ENCODE measurements at regions of chr1 and their contacts with region 1.

Region 1: DNA sequence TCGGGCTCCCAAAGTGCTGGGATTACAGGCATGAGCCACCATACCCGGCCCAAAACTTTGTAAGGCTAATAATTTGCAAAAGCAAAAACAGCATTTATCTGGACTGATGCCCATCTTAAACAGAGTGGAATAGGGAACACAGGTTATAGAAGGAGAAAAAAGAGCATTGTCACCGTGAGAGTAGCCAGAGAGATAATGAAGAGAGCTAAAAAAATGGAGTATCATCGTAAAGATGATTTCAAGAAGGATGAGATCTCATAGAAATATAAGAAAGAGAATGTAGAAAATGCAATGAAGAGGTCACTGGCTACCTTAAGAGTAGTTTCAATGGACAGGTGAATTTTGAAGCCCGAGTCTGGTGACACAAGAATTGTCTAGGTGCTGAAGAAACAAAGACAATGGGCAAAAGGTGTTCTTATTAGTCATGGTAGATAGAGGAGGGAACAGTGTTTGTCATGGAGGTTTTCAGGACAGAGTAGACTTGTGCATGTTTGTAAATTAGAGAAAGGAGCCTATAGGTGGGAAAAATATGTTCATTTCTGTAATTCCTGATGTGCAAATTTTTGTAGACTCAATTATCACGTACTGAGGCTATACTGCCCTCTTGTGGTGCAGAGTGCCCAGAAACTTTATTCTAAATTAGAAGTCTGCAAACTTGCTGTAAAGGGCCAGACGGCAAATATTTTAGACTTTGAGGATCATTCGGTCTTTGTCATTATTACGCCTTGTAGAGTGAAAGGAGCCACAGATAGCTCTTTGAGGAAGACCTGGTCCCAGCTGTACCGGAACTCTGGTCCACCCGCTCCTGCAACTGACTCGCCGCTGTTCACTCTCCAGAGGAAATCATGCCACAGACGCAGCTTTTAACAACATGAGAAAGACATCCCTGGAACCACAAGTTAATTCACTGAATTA is 8.1 kb upstream of the TMEM183A start:
- H3K4me3 Mint-ChIP-seq: peak overlapping the region; percentile 27
- H3K27ac Mint-ChIP-seq: no peak overlapping the region
- H3K4me1 Mint-ChIP-seq: peaks cover 38% of the 10 kb centered on the region
- H3K27me3 Mint-ChIP-seq: no peaks in the 10 kb centered on the region

Region 2: DNA sequence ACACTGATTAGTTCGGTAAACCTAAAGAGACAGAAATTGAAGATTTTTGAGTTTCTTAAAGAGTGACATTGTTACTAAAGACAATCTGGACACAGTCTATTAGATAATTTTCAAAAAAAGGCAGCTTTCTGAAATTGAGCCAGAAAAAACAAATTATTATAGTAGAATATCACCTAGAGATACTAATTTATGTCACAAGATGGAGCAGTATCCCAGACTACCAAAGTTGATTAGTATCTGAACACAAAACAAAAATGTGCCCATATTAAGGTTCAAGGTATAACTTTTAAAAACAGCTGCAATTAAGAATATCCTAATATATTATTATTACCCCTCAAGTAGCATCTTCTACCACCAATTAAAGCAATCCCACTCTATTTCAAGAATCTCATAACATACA is 248.3 kb before region 1 on chr1:
- intact Hi-C with region 1: loop called (anchors 10 kb)
- H3K4me3 Mint-ChIP-seq: no peak overlapping the region
- H3K27ac Mint-ChIP-seq: no peak overlapping the region
- H3K4me1 Mint-ChIP-seq: peaks cover 11% of the 10 kb centered on the region
- H3K27me3 Mint-ChIP-seq: no peaks in the 10 kb centered on the region

Region 3: DNA sequence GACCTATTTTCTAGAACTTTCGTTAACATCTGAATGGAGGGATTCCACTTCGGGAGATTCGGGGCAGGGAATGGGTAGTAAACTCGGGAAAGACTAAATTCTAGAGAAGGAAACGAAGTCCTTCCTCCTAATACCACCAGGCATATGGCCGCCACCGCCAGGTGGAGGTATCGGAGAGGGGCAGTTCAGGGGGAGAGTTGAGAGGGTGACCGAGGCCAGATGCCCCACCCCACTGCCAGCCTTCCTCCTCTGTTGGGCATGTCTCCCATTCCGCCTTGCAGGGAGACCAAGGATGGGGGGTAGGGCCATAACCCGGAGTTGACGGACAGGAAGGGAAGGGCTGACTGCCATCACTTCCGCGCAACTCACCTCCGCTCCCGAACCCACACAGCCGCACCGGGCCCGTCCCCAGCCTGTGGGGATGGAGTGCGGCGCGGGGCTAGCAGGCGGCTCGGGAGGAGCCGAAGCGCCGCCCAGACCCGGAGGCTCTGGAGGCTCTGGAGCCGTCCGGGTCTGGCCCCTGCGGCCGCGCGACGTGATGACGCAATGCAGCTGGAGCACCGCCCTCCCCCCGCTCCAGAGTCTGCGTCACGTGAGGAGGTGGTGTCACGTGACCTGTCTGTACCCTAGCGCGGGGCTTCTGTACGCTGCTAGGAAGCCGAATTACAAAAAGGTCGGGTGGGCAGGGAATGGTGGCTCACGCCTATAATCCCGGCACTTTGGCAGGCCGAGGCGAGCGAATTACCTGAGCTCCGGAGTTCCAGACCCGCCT is 72.2 kb before region 1 on chr1 and contains the start of gene KLHL12:
- intact Hi-C with region 1: loop called (anchors 2 kb)
- H3K4me3 Mint-ChIP-seq: peak within 1 kb of the TSS; percentile 91
- H3K27ac Mint-ChIP-seq: peak within 1 kb of the TSS; percentile 95
- H3K4me1 Mint-ChIP-seq: peaks cover 40% of the 10 kb centered on the region
- H3K27me3 Mint-ChIP-seq: peaks cover 3% of the 10 kb centered on the region

Region 4: DNA sequence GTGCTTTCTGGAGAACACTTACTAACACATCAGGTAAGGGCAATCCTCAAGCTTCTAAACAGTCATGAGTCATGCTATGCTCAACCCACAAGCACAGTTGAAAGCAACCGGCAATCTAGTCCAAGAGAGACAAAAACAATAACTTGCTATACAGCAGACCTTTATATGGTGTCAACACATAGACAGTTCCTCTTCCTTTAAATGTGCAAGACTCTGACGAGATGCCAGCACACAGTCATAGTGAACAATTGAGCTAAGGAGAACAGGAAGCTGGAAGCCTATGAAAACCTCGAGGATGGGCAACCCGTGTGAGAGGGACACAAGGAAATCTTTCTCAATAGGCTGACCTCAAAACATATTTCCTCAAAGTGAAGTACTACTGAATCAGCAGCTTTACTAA is 46.3 kb before region 1 on chr1:
- intact Hi-C with region 1: loop called (anchors 2 kb)
- H3K4me3 Mint-ChIP-seq: peak overlapping the region; percentile 59
- H3K27ac Mint-ChIP-seq: peak overlapping the region; percentile 85
- H3K4me1 Mint-ChIP-seq: peaks cover 57% of the 10 kb centered on the region
- H3K27me3 Mint-ChIP-seq: no peaks in the 10 kb centered on the region